Endothelial cell of umbilical vein (primary cell): ENCODE measurements at regions of chr11 and their contacts with region 1.

Region 1: DNA sequence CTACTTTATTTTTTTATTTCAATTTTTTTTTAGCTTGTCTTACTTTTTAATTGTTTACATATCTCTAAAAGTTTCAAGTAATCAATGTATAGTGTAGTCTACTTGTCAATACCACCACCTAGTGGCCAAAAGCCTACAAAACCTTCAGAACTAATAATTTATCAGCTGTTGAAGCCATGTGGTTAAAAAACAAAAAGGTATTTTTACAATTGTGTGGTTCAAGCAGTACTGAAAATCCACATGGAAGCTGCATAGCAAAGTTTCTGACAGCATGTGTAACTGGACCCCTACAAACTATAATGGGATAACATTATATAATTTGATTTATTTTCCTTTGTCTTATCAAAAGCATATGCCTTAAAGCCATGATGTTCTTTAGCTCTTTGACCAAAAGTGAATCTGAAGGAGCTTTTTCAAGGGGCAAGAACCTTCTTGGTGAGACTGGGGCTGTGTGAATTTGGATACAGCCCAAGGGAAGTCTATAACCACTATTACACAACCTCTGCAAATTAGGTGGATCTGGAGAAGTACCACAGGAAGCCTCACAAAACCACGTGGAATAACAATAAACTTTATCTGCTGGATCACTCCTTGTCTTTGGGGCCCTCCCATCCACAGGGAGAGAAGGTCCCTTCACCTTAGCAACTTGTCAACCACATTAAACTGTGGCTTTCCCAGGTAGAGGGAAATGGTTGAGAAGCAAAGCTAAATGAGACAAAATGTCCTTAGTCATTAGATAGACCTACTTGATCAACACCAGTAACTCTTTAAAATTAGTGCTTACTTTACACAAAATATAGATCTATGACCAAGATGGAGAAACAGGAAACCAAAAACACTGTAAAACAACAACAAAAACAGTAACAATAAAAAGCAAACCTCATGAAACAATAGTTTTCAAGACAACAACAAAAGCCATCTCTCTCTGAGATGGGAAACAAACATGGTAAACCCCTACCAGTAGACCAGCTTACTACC is 9.9 kb downstream of the NARS2 start:
- DNase-seq: peak; percentile 83
- H3K4me3 ChIP-seq: no peak overlapping the region
- H3K27ac ChIP-seq: no peak overlapping the region
- H3K4me1 ChIP-seq: peaks cover 45% of the 10 kb centered on the region
- H3K27me3 ChIP-seq: no peaks in the 10 kb centered on the region
- CTCF ChIP-seq: peak; percentile 37 to 40
- POLR2A ChIP-seq: no peak

Region 2: GRCh38 chr11:77994412-77995362 is 570.1 kb before region 1 on chr11 and contains the start of gene INTS4:
- CTCF ChIA-PET with region 1: interaction called, 13 read pairs
- POLR2A ChIA-PET with region 1: no interaction called
- dilution Hi-C with region 1: no loop called
- intact Hi-C with region 1: loop called (anchors 1 kb)
- DNase-seq: peak; percentile 100
- H3K4me3 ChIP-seq: peak within 1 kb of the TSS; percentile 75 to 99 (median 95)
- H3K27ac ChIP-seq: peak within 1 kb of the TSS; percentile 47
- H3K4me1 ChIP-seq: peaks cover 15% of the 10 kb centered on the region
- H3K27me3 ChIP-seq: no peaks in the 10 kb centered on the region
- CTCF ChIP-seq: no peak
- POLR2A ChIP-seq: peak; percentile 77
- total RNA-seq, gene INTS4: 37.8 and 39.2 TPM in 2 replicates

Region 3: GRCh38 chr11:78079232-78080083 is 485.3 kb before region 1 on chr11 and contains the start of gene NDUFC2:
- CTCF ChIA-PET with region 1: interaction called, 4 read pairs
- POLR2A ChIA-PET with region 1: no interaction called
- dilution Hi-C with region 1: no loop called
- intact Hi-C with region 1: loop called (anchors 5 kb)
- DNase-seq: peak; percentile 85
- H3K4me3 ChIP-seq: peak within 1 kb of the TSS; percentile 83 to 97 (median 94)
- H3K27ac ChIP-seq: peak within 1 kb of the TSS; percentile 80
- H3K4me1 ChIP-seq: peaks cover 18% of the 10 kb centered on the region
- H3K27me3 ChIP-seq: no peaks in the 10 kb centered on the region
- CTCF ChIP-seq: no peak
- POLR2A ChIP-seq: peak; percentile 97
- total RNA-seq, gene NDUFC2: 226 and 236 TPM in 2 replicates

Region 4: GRCh38 chr11:78188286-78189173 is 376.2 kb before region 1 on chr11 and contains the starts of genes KCTD21 and USP35:
- CTCF ChIA-PET with region 1: interaction called, 15 read pairs
- POLR2A ChIA-PET with region 1: no interaction called
- dilution Hi-C with region 1: no loop called
- intact Hi-C with region 1: no loop called
- DNase-seq: peak; percentile 98
- H3K4me3 ChIP-seq: peak within 1 kb of the TSS; percentile 68 to 81 (median 71)
- H3K27ac ChIP-seq: peak within 1 kb of the TSS; percentile 14
- H3K4me1 ChIP-seq: peaks cover 40% of the 10 kb centered on the region
- H3K27me3 ChIP-seq: no peaks in the 10 kb centered on the region
- CTCF ChIP-seq: no peak
- POLR2A ChIP-seq: peak; percentile 90
- total RNA-seq, gene KCTD21: 8.5 and 9.5 TPM in 2 replicates
- total RNA-seq, gene USP35: 10.3 and 12.4 TPM in 2 replicates

Region 5: GRCh38 chr11:78239781-78240180 is 325.0 kb before region 1 on chr11:
- CTCF ChIA-PET with region 1: interaction called, 21 read pairs
- POLR2A ChIA-PET with region 1: no interaction called
- dilution Hi-C with region 1: no loop called
- intact Hi-C with region 1: no loop called
- DNase-seq: no peak
- H3K4me3 ChIP-seq: no peak overlapping the region
- H3K27ac ChIP-seq: no peak overlapping the region
- H3K4me1 ChIP-seq: peaks cover 3% of the 10 kb centered on the region
- H3K27me3 ChIP-seq: no peaks in the 10 kb centered on the region
- CTCF ChIP-seq: no peak
- POLR2A ChIP-seq: no peak

Region 6: GRCh38 chr11:78416305-78417178 is 148.2 kb before region 1 on chr11:
- CTCF ChIA-PET with region 1: interaction called, 190 read pairs
- POLR2A ChIA-PET with region 1: interaction called, 10 read pairs
- dilution Hi-C with region 1: no loop called
- intact Hi-C with region 1: loop called (anchors 1 kb)
- DNase-seq: peak; percentile 91
- H3K4me3 ChIP-seq: peak overlapping the region; percentile 40 to 91 (median 75)
- H3K27ac ChIP-seq: peak overlapping the region; percentile 91
- H3K4me1 ChIP-seq: peaks cover 46% of the 10 kb centered on the region
- H3K27me3 ChIP-seq: no peaks in the 10 kb centered on the region
- CTCF ChIP-seq: peak; percentile 28 to 59
- POLR2A ChIP-seq: peak; percentile 58

Region 7: DNA sequence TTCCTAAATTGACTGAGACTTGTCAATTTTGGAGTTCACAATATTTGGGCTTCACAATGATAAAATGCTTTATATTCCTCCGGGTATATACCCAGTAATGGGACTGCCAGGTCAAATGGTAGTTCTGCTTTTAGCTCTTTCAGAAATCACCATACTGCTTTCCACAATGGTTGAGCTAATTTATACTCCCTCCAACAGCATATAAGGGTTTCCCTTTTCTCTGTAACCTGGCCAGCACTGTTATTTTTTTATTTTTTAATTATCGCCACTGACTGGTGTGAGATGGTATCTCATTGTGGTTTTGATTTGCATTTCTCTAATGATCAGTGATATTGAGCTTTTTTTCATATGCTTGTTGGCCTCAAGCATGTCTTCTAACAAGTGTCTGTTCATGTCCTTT is 11.9 kb before region 1 on chr11:
- CTCF ChIA-PET with region 1: interaction called, 13 read pairs
- POLR2A ChIA-PET with region 1: no interaction called
- dilution Hi-C with region 1: no loop called
- intact Hi-C with region 1: no loop called
- DNase-seq: no peak
- H3K4me3 ChIP-seq: no peak overlapping the region
- H3K27ac ChIP-seq: no peak overlapping the region
- H3K4me1 ChIP-seq: no peaks in the 10 kb centered on the region
- H3K27me3 ChIP-seq: no peaks in the 10 kb centered on the region
- CTCF ChIP-seq: no peak
- POLR2A ChIP-seq: no peak